ENCODE measurements at regions of chr21 and their contacts with region 1.

Region 1: DNA sequence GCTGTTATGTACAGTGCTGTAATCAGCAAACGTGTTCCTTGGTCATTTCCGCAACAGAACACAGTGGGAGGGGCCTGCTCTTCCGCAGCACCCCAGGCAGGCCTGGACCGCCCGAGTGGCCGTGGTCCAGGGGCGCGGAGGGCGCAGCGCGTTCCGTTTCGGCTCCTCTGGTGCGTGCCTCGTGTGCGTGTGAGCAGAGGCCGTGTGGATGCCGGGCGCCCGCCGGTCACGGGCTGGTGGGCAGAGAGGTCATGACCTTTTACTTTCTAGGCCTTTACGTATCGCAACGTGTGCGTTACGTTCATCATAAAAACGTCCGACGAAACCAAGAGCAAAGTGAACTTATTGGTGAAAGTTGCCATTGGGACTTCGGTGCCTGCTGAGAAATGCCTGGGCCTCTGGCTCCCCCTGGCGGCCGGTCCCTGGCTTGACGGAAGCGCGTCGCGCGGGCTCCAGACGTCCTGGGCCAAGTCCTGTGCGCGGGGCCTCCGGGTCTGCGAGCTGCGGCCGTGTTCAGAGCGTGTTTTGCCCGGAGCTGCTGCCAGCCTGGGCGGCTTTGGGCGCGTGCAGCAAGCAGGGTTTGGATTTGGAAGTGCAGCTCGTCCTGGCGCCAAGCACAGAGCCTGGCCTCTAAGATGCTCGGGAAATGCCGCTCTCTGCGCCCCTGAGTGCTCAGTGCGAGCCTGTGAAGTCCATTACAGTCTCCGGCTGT is 34.4 kb downstream of the COL18A1 start:
- DNase-seq: peak; percentile 81
- ATAC-seq: peak; percentile 83
- H3K4me3 Mint-ChIP-seq: peak overlapping the region; percentile 66
- H3K27ac Mint-ChIP-seq: no peak overlapping the region
- H3K4me1 Mint-ChIP-seq: peaks cover 4% of the 10 kb centered on the region
- H3K27me3 Mint-ChIP-seq: peaks cover 15% of the 10 kb centered on the region
- CTCF ChIP-seq: no peak

Region 2: DNA sequence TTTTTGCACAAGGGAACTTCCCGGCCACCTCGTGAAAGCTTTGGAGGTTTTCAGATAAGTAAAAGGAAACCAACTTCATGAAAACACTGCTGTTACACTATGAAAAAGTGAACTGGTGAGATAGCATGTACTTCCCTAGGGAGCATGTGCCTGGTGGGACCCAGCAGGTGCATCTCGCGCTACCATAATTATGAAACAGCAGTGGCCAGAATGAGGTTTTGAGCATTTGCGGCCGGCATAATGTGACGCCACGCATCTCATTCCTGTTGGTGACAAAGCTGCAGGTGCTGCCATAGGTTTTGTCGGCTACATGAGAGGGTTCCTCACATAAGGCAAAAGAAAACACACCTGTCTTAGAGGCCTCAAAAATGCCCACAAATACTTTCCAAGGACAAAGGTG is 882.4 kb before region 1 on chr21:
- CTCF ChIA-PET with region 1: no interaction called
- POLR2A ChIA-PET with region 1: no interaction called
- intact Hi-C with region 1: no loop called
- DNase-seq: peak; percentile 15
- ATAC-seq: peak; percentile 85
- H3K4me3 Mint-ChIP-seq: no peak overlapping the region
- H3K27ac Mint-ChIP-seq: no peak overlapping the region
- H3K4me1 Mint-ChIP-seq: peaks cover 16% of the 10 kb centered on the region
- H3K27me3 Mint-ChIP-seq: peaks cover 16% of the 10 kb centered on the region
- CTCF ChIP-seq: no peak

Region 3: GRCh38 chr21:44949779-44950198 is 489.5 kb before region 1 on chr21:
- CTCF ChIA-PET with region 1: no interaction called
- POLR2A ChIA-PET with region 1: no interaction called
- intact Hi-C with region 1: loop called (anchors 1 kb)
- DNase-seq: peak; percentile 76
- ATAC-seq: peak; percentile 91
- H3K4me3 Mint-ChIP-seq: no peak overlapping the region
- H3K27ac Mint-ChIP-seq: no peak overlapping the region
- H3K4me1 Mint-ChIP-seq: peaks cover 40% of the 10 kb centered on the region
- H3K27me3 Mint-ChIP-seq: no peaks in the 10 kb centered on the region
- CTCF ChIP-seq: peak; percentile 86

Region 4: GRCh38 chr21:45152265-45152746 is 287.0 kb before region 1 on chr21:
- CTCF ChIA-PET with region 1: interaction called, 4 read pairs
- POLR2A ChIA-PET with region 1: no interaction called
- intact Hi-C with region 1: loop called (anchors 1 kb)
- DNase-seq: peak; percentile 51
- ATAC-seq: peak; percentile 98
- H3K4me3 Mint-ChIP-seq: peak overlapping the region; percentile 68
- H3K27ac Mint-ChIP-seq: peak overlapping the region; percentile 26
- H3K4me1 Mint-ChIP-seq: peaks cover 44% of the 10 kb centered on the region
- H3K27me3 Mint-ChIP-seq: no peaks in the 10 kb centered on the region
- CTCF ChIP-seq: no peak

Region 5: DNA sequence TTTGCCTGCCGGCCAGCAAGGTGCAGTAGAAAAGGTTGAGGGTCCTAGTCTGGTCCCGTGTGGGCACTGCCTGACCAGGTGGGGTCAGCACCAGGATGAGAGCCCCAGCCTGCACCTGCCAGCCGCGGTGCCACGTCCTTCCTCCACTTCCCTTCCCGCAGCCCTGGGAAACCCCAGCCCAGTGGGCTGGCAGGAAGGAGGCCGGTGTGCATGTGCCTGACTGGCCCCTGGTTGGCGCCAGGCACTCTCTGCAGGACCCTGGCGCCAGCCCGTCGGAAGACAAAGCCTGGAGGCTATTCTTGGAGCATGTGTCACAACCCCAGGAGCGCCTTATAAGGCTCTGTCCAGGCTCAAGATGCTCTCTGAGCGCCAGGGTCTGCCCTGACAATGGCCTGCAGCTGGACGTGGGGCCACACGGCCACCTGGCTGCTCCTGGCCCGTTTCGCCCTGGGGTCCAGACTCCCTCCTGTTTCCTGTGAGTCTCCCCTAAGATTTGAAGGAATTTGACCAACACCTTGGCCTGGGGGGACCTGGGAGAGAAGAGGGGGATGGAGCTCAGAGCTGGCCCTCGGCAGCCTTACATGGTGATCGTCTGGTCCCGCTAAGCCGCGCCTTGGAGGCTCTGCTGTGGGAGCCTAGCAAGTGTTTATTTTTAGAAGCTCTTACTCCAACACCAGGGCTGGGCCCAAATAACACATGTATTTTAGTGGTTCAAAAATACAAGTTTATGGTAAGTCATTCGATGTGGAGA is 119.7 kb before region 1 on chr21:
- CTCF ChIA-PET with region 1: no interaction called
- POLR2A ChIA-PET with region 1: no interaction called
- intact Hi-C with region 1: no loop called
- DNase-seq: no peak
- ATAC-seq: no peak
- H3K4me3 Mint-ChIP-seq: no peak overlapping the region
- H3K27ac Mint-ChIP-seq: no peak overlapping the region
- H3K4me1 Mint-ChIP-seq: peaks cover 10% of the 10 kb centered on the region
- H3K27me3 Mint-ChIP-seq: peaks cover 22% of the 10 kb centered on the region
- CTCF ChIP-seq: no peak

Region 6: DNA sequence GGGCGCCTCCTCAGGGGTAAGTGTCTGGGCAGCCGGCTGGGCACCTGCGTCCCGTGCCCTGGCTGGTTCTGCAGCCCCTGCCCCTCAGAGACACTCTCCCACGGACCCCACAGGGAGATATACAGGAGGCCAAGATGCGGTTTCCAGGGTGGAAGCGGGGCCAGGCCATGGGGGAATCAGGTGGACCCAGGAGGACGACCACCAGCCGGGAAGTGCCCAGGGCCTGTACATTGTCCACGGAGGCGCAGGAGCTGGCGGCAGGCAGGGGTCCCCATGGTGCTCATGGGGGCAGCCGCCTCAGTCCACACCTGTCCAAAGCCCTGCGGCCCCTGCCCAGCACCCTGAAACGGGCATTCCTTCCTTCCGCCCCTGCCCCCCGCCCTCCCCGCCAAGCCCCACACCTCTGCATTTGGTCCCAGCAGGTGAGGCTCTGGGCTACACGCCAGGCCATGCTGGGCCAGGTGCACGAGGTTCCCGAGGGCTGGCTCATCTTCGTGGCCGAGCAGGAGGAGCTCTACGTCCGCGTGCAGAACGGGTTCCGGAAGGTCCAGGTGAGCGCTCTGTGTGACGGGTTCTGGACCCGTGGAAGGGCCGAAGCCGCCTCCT is 66.2 kb after region 1 on chr21:
- CTCF ChIA-PET with region 1: no interaction called
- POLR2A ChIA-PET with region 1: no interaction called
- intact Hi-C with region 1: no loop called
- DNase-seq: no peak
- ATAC-seq: no peak
- H3K4me3 Mint-ChIP-seq: no peak overlapping the region
- H3K27ac Mint-ChIP-seq: no peak overlapping the region
- H3K4me1 Mint-ChIP-seq: no peaks in the 10 kb centered on the region
- H3K27me3 Mint-ChIP-seq: no peaks in the 10 kb centered on the region
- CTCF ChIP-seq: no peak

Region 7: GRCh38 chr21:45820171-45821091 is 381.1 kb after region 1 on chr21:
- CTCF ChIA-PET with region 1: interaction called, 3 read pairs
- POLR2A ChIA-PET with region 1: no interaction called
- intact Hi-C with region 1: loop called (anchors 1 kb)
- DNase-seq: peak; percentile 60
- ATAC-seq: peak; percentile 73
- H3K4me3 Mint-ChIP-seq: no peak overlapping the region
- H3K27ac Mint-ChIP-seq: no peak overlapping the region
- H3K4me1 Mint-ChIP-seq: peaks cover 3% of the 10 kb centered on the region
- H3K27me3 Mint-ChIP-seq: peaks cover 23% of the 10 kb centered on the region
- CTCF ChIP-seq: no peak